Upper lobe of right lung (tissue), 1 donor: ENCODE measurements at regions of chr4 and their contacts with region 1.

Region 1: DNA sequence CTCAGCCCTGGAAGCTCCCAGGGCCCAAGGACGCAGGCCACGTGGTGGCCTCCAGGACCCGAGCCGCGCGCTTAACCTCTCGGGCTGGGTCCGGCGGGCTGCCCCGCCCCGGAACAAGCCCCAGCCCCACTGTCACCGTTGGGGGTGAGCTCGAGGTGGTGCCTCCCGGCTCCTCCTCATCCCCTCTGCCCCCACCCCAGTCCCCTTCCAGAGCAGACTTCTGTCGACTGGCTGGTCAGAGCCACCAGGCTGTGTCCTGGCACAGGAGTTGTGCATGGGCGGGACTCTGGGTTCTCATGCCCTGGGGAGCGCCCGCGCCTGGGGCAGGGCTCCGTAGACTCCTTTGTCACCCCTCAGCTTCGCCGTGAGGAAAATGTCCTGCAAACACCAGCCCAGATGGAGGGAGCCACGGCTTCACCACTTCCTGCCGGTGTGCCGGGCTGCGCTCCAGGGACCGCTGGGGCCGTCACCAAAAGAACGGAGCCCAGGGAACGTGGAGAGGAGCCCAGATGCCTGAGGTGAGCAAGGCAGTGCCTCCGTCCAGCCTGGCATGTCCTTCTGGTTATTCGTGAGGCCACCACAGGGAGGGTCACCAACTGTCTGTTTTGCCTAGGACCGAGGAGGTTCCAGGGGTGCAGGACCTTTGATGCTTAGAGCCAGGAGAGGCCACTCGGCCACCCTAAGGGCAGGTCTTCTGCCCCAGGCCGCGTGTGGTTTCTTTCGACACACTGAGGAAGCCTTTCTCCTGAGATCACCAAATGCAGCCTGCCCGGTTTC is 7.1 kb upstream of the RGS12 start:
- DNase-seq: peak; percentile 75
- ATAC-seq: peak; percentile 82
- H3K4me3 ChIP-seq: no peak overlapping the region
- H3K27ac ChIP-seq: no peak overlapping the region
- H3K4me1 ChIP-seq: peaks cover 13% of the 10 kb centered on the region
- H3K27me3 ChIP-seq: no peaks in the 10 kb centered on the region
- CTCF ChIP-seq: no peak

Region 2: DNA sequence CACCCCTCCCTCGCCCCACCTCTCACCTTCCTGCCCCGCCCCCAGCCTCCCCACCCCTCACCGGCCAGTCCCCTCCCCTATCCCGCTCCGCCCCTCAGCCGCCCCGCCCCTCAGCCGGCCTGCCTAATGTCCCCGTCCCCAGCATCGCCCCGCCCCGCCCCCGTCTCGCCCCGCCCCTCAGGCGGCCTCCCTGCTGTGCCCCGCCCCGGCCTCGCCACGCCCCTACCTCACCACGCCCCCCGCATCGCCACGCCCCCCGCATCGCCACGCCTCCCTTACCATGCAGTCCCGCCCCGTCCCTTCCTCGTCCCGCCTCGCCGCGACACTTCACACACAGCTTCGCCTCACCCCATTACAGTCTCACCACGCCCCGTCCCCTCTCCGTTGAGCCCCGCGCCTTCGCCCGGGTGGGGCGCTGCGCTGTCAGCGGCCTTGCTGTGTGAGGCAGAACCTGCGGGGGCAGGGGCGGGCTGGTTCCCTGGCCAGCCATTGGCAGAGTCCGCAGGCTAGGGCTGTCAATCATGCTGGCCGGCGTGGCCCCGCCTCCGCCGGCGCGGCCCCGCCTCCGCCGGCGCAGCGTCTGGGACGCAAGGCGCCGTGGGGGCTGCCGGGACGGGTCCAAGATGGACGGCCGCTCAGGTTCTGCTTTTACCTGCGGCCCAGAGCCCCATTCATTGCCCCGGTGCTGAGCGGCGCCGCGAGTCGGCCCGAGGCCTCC is 211.5 kb before region 1 on chr4 and contains the starts of genes HTT and HTT-AS:
- intact Hi-C with region 1: loop called (anchors 10 kb)
- DNase-seq: peak; percentile 99
- ATAC-seq: peak; percentile 94
- H3K4me3 ChIP-seq: peak within 1 kb of the TSS; percentile 81
- H3K27ac ChIP-seq: peak within 1 kb of the TSS; percentile 86
- H3K4me1 ChIP-seq: peaks cover 20% of the 10 kb centered on the region
- H3K27me3 ChIP-seq: no peaks in the 10 kb centered on the region
- CTCF ChIP-seq: peak; percentile 14
- total RNA-seq, gene HTT: 73.6 TPM
- total RNA-seq, gene HTT-AS: not detected